Astrocyte of the cerebellum (primary cell): ENCODE measurements at regions of chr3 and their contacts with region 1.

Region 1: GRCh38 chr3:111874177-111874820 is 15.2 kb downstream of the PHLDB2 start:
- DNase-seq: peak; percentile 65
- H3K4me3 ChIP-seq: no peak overlapping the region
- CTCF ChIP-seq: no peak

Region 2: DNA sequence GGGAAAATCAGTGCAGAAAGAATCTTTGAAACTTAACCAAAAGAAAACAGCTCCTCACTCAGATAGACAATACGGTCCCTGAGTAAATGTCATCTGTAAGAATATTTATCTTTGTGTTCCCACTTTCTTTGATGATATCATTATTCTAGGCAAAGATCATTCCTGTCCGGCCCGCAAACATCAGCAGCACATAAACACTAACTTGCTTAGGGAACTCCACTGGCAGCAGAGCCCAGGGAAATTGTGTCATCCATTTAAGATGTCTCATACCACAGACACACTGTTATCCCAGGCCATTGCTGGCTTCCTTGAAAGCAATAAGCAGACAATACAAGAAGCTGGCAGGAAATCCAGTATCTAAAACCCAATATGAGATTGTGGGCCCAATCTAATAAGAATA is 352.4 kb before region 1 on chr3:
- in situ Hi-C with region 1: no loop called
- DNase-seq: no peak
- H3K4me3 ChIP-seq: no peak overlapping the region
- CTCF ChIP-seq: no peak

Region 3: GRCh38 chr3:111803123-111803593 is 71.1 kb before region 1 on chr3:
- in situ Hi-C with region 1: no loop called
- DNase-seq: peak; percentile 95
- H3K4me3 ChIP-seq: no peak overlapping the region
- CTCF ChIP-seq: no peak

Region 4: GRCh38 chr3:111824351-111824750 is 49.9 kb before region 1 on chr3:
- in situ Hi-C with region 1: no loop called
- DNase-seq: no peak
- H3K4me3 ChIP-seq: no peak overlapping the region
- CTCF ChIP-seq: no peak

Region 5: DNA sequence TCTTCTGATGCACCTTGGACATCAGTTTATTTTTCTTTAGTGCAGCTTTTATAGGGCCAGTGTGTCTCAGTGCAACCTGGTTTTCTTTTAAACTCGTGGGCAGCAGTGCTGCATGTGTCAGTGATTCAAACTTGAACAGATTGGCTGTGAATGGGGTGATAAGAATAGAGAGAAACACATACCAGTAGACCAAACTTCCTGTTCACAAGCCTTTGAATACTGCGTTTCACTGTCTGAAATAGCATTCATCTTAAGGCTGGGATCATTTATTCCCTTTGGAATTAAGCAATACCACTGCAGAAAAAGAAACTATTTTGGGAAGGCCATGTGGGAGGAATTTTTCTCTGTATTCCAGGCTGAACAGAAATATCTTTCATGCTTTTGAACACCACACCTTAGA is 36.5 kb after region 1 on chr3:
- in situ Hi-C with region 1: loop called (anchors 5 kb)
- DNase-seq: peak; percentile 32
- H3K4me3 ChIP-seq: no peak overlapping the region
- CTCF ChIP-seq: no peak